ENCODE measurements at regions of chr19 and their contacts with region 1.

Region 1: GRCh38 chr19:2900296-2901252 is at the start of gene ZNF57:
- DNase-seq: peak; percentile 95 to 96
- H3K4me3 ChIP-seq: peak within 1 kb of the TSS; percentile 79
- H3K27ac ChIP-seq: no peak within 1 kb of the TSS
- H3K4me1 ChIP-seq: no peaks in the 10 kb centered on the region
- H3K27me3 ChIP-seq: no peaks in the 10 kb centered on the region
- CTCF ChIP-seq: no peak
- total RNA-seq, gene ZNF57: 2.6 TPM in 2 replicates

Region 2: GRCh38 chr19:2944775-2945574 is 44.4 kb after region 1 on chr19 and contains the start of gene ZNF77:
- CTCF ChIA-PET with region 1: no interaction called
- POLR2A ChIA-PET with region 1: no interaction called
- intact Hi-C with region 1: loop called (anchors 2 kb)
- DNase-seq: peak; percentile 94 to 96
- H3K4me3 ChIP-seq: peak within 1 kb of the TSS; percentile 64
- H3K27ac ChIP-seq: peak within 1 kb of the TSS; percentile 61
- H3K4me1 ChIP-seq: no peaks in the 10 kb centered on the region; the same call in 1 of the 2 replicates
- H3K27me3 ChIP-seq: no peaks in the 10 kb centered on the region
- CTCF ChIP-seq: no peak
- total RNA-seq, gene ZNF77: 2.1 and 2.5 TPM in 2 replicates

Measured in PC-9 (cell line).